ENCODE measurements at regions of chr21 and their contacts with region 1.

Region 1: GRCh38 chr21:29298348-29299045 is at the start of gene BACH1:
- DNase-seq: peak; percentile 91
- ATAC-seq: peak; percentile 81
- H3K4me3 ChIP-seq: peak within 1 kb of the TSS; percentile 96
- H3K27ac ChIP-seq: peak within 1 kb of the TSS; percentile 95
- H3K4me1 ChIP-seq: peaks cover 3% of the 10 kb centered on the region; the same call in 1 of the 2 replicates
- H3K27me3 ChIP-seq: no peaks in the 10 kb centered on the region
- CTCF ChIP-seq: peak; percentile 62
- POLR2A ChIP-seq: peak; percentile 97
- RAD21 ChIP-seq: peak; percentile 60
- total RNA-seq, gene BACH1: 108 and 132 TPM in 2 replicates

Region 2: DNA sequence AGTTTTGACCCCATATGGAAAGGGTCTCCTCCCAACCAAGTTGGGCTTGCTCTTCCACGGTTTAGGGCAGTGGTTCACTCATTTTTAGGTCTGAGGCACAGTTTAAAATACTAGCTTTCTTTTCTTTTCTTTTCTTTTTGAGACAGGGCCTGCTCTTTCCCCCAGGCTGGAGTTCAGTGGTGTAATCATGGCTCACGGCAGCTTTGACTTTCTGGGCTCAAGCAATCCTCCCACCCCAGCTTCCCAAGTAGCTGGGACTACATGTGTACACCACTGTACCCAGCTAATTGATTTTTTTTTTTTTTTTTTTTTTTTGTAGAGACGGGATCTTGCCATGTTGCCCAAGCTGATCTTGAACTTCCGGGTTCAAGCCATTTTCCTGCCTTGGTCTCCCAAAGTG is 199.5 kb before region 1 on chr21:
- CTCF ChIA-PET with region 1: interaction called, 3 read pairs
- POLR2A ChIA-PET with region 1: interaction called, 18 read pairs
- dilution Hi-C with region 1: no loop called
- in situ Hi-C with region 1: no loop called
- intact Hi-C with region 1: no loop called
- DNase-seq: no peak
- ATAC-seq: no peak
- H3K4me3 ChIP-seq: no peak overlapping the region
- H3K27ac ChIP-seq: no peak overlapping the region; the same call in 1 of the 2 replicates
- H3K4me1 ChIP-seq: peaks cover 4% of the 10 kb centered on the region; the same call in 1 of the 2 replicates
- H3K27me3 ChIP-seq: no peaks in the 10 kb centered on the region
- CTCF ChIP-seq: no peak
- POLR2A ChIP-seq: no peak
- RAD21 ChIP-seq: no peak

Region 3: DNA sequence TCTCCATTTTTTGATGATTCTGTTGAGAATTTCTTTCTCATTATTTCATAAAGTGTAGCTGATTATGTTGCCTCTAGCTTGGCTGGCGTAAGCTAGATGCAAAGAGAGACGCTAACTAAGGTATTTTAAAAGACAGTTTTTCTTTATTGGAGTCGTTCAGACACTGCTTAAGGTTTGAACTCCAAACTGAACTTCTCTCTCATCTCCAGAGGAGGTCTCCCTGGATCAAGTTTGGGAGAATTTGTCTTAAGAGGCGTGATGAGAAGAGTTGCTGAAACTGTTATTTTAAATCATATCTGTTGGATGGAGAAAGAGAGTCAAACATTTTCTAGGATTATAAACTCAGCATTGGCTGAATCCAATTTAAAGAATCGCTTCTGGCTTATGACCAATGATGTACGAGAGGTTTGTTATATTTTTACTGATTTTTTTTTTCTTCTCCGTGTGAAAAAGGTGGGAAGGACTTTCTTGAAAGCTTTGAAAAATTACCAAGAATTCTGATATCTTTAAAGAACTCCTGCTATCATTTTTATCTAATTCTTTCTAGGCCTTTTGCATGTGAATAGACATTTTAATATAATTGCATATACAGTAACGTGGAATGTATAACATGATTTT is 134.1 kb before region 1 on chr21:
- CTCF ChIA-PET with region 1: interaction called, 6 read pairs
- POLR2A ChIA-PET with region 1: interaction called, 14 read pairs
- dilution Hi-C with region 1: no loop called
- in situ Hi-C with region 1: no loop called
- intact Hi-C with region 1: loop called (anchors 1 kb)
- DNase-seq: peak; percentile 91
- ATAC-seq: peak; percentile 79
- H3K4me3 ChIP-seq: no peak overlapping the region
- H3K27ac ChIP-seq: no peak overlapping the region
- H3K4me1 ChIP-seq: peaks cover 5% of the 10 kb centered on the region; the same call in 1 of the 2 replicates
- H3K27me3 ChIP-seq: no peaks in the 10 kb centered on the region
- CTCF ChIP-seq: peak; percentile 90
- POLR2A ChIP-seq: 0 out of 2 replicates have a peak, but pooled peaks have one; percentile 34
- RAD21 ChIP-seq: peak; percentile 97

Region 4: GRCh38 chr21:29175408-29176134 is 122.9 kb before region 1 on chr21:
- CTCF ChIA-PET with region 1: no interaction called
- POLR2A ChIA-PET with region 1: interaction called, 6 read pairs
- dilution Hi-C with region 1: no loop called
- in situ Hi-C with region 1: loop called (anchors 10 kb)
- intact Hi-C with region 1: loop called (anchors 2 kb)
- DNase-seq: peak; percentile 75
- ATAC-seq: peak; percentile 76
- H3K4me3 ChIP-seq: no peak overlapping the region
- H3K27ac ChIP-seq: no peak overlapping the region; the same call in 1 of the 2 replicates
- H3K4me1 ChIP-seq: peaks cover 5% of the 10 kb centered on the region
- H3K27me3 ChIP-seq: no peaks in the 10 kb centered on the region
- CTCF ChIP-seq: no peak
- POLR2A ChIP-seq: no peak
- RAD21 ChIP-seq: no peak

Region 5: GRCh38 chr21:29342363-29342957 is 44.0 kb after region 1 on chr21:
- CTCF ChIA-PET with region 1: interaction called, 3 read pairs
- POLR2A ChIA-PET with region 1: interaction called, 3 read pairs
- dilution Hi-C with region 1: no loop called
- in situ Hi-C with region 1: no loop called
- intact Hi-C with region 1: loop called (anchors 2 kb)
- DNase-seq: peak; percentile 99
- ATAC-seq: peak; percentile 73
- H3K4me3 ChIP-seq: peak overlapping the region; percentile 8; the same call in 1 of the 2 replicates
- H3K27ac ChIP-seq: peak overlapping the region; percentile 68
- H3K4me1 ChIP-seq: peaks cover 31% of the 10 kb centered on the region
- H3K27me3 ChIP-seq: no peaks in the 10 kb centered on the region
- CTCF ChIP-seq: 0 out of 2 replicates have a peak, but pooled peaks have one; percentile 12
- POLR2A ChIP-seq: peak; percentile 79
- RAD21 ChIP-seq: peak; percentile 13; the same call in 1 of the 2 replicates

Region 6: DNA sequence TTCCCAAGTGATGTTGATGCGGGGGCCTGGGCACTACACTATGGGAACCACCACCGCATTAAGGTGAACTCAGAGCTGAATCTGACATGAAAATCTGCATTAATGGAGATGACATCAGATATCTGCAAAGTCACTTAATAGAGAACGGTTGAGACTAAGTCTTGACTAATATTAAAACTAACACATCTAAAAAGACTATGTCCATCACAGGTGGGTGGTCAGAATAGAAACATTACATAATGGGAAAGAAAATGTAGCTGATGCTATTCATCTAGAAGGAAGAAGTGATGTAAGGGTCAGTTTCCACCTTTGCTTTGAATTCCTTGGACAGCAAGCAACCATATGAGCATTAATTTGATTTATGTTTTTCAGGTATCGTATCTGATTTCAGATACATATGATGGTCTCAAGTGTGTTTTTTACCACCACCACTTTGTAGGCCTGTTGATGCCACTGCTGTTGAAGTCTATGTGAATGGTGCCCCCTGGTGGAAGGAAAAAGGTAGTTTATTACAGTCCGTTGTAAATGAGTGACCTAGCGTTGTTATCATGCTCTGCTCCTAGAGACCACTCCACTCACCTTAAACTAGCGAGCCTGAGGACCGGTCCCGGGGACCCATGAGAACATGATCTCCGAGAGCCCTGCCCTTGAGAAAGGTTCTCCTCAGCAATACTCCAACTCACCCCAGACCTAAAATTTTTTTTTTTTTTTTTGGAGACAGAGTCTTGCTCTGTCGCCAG is 73.7 kb after region 1 on chr21:
- CTCF ChIA-PET with region 1: no interaction called
- POLR2A ChIA-PET with region 1: no interaction called
- dilution Hi-C with region 1: no loop called
- in situ Hi-C with region 1: no loop called
- intact Hi-C with region 1: loop called (anchors 2 kb)
- DNase-seq: peak; percentile 84
- ATAC-seq: peak; percentile 94
- H3K4me3 ChIP-seq: no peak overlapping the region
- H3K27ac ChIP-seq: no peak overlapping the region
- H3K4me1 ChIP-seq: peaks cover 2% of the 10 kb centered on the region; the same call in 1 of the 2 replicates
- H3K27me3 ChIP-seq: no peaks in the 10 kb centered on the region
- CTCF ChIP-seq: peak; percentile 82
- POLR2A ChIP-seq: no peak
- RAD21 ChIP-seq: peak; percentile 93

Region 7: GRCh38 chr21:29449306-29449950 is 150.9 kb after region 1 on chr21:
- CTCF ChIA-PET with region 1: no interaction called
- POLR2A ChIA-PET with region 1: no interaction called
- dilution Hi-C with region 1: no loop called
- in situ Hi-C with region 1: no loop called
- intact Hi-C with region 1: no loop called
- DNase-seq: no peak
- ATAC-seq: no peak
- H3K4me3 ChIP-seq: no peak overlapping the region
- H3K27ac ChIP-seq: no peak overlapping the region
- H3K4me1 ChIP-seq: no peaks in the 10 kb centered on the region
- H3K27me3 ChIP-seq: no peaks in the 10 kb centered on the region
- CTCF ChIP-seq: no peak
- POLR2A ChIP-seq: no peak
- RAD21 ChIP-seq: no peak

Region 8: DNA sequence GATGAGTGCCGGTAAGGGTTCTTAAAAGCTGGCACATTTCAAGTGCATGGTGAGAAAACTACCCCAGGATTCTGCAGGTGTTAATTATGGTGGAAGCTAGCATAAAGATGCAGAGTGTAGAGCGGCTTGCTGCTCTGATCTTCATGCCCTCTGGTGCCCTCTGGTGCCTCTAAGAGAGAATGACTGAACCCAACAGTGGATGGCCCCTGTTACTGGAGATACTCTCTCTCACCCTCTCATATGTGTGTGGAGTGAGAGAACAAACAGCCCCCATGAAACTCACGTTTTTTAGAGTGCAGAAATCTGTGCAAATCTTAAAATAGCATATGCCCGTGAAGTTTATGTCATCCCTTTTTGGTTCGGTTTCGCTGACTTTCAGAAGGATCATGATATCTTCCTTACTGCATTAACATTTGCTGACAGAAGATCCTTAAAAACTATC is 551.3 kb after region 1 on chr21:
- CTCF ChIA-PET with region 1: no interaction called
- POLR2A ChIA-PET with region 1: no interaction called
- dilution Hi-C with region 1: no loop called
- in situ Hi-C with region 1: no loop called
- intact Hi-C with region 1: loop called (anchors 2 kb)
- DNase-seq: peak; percentile 57
- ATAC-seq: peak; percentile 100
- H3K4me3 ChIP-seq: no peak overlapping the region
- H3K27ac ChIP-seq: no peak overlapping the region
- H3K4me1 ChIP-seq: no peaks in the 10 kb centered on the region
- H3K27me3 ChIP-seq: no peaks in the 10 kb centered on the region; the same call in none of the 2 replicates
- CTCF ChIP-seq: peak; percentile 78
- POLR2A ChIP-seq: 0 out of 2 replicates have a peak, but pooled peaks have one; percentile 22
- RAD21 ChIP-seq: peak; percentile 88

Measured in IMR-90 (cell line).